CD4-positive, alpha-beta memory T cell (primary cell): ENCODE measurements at regions of chr1 and their contacts with region 1.

Region 1: DNA sequence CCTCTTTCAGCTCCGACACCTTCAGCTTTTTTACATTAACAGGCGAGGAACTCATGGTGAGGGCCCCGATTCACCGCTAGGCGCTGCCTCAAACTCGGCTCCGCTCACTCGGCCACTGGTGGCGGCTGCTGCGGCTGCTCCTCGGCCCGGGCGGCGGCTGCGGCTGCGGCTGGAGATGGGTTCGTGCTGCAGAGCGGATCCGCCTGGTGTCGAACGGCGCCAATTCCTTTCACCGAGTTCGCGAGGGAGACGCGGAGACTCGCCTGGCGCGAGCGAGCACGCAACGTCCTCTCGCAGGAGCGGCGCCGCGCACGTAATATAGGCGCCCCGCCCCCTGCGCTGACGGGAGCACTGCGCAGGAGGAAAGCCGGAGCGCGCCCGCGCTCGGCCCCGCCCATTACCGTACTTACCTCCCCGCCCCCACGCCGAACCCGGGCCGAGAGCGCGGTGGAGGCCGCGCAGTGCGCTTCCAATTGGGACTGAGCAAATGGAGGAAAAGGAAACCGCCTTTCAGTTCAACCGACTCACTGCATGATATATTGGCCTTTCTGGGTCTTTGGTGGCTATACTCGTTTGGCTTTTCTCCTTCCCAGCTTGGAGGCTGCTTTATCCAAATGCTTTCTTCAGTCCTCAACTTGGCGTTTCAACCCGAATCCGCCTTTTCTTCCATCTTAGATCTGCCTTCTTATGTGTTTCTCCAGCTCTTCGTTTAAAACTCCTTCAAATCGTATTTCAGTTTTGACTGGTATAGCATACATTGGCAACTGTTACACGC is at the start of gene HNRNPU:
- DNase-seq: peak; percentile 94 to 98 (median 98)
- H3K4me3 ChIP-seq: peak within 1 kb of the TSS; percentile 64 to 77
- H3K4me3 Mint-ChIP-seq: peak within 1 kb of the TSS; percentile 86 to 97 (median 96)
- H3K27ac ChIP-seq: peak within 1 kb of the TSS; percentile 99
- H3K27ac Mint-ChIP-seq: peak within 1 kb of the TSS; percentile 97 to 100 (median 99)
- H3K4me1 ChIP-seq: peaks cover 39% of the 10 kb centered on the region
- H3K4me1 Mint-ChIP-seq: peaks cover 29 to 70% (median 40%) of the 10 kb centered on the region in 4 donors
- H3K27me3 ChIP-seq: no peaks in the 10 kb centered on the region
- H3K27me3 Mint-ChIP-seq: peaks cover 0 to 1% of the 10 kb centered on the region in 2 donors
- total RNA-seq, gene HNRNPU: 370 to 385 TPM

Region 2: DNA sequence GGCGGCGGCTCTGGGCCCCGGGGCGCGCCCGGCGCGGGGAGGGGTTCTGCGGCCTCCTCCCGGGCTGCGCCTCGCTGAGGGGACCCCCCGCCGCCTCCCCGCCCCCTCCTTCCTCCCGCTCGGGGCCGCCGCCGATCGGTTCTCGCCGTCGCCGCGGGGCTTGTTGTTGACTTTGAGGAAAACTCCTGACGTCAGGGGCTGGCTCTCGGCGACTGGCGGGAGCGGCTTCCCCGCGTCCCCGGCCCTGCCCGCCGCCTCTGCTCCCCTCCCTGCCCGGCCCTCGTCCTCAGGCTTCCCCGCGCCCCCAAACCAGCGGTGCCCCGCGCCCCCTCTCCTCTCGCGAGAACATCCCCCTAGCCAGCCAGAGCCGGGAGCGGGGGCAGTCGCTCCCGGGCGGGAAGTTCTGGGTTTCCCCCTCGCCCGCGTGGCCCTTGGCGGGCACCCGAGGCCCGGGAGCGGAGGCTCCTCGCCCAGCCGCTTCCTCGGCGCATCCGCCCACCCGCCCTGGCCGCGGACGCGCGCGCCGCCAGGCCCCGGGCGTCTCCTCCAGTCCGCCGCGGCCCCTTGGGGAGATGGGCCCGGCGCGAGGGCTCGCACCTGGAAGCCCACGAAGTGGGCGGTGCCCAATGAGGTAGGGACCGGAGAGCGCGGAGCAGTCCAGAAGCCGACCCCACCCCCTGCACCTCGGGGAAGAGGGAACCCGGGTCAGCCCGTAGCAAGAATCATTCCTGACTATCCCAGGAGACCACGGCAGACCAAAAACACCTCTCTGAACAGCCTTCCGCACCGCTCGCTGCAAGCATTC is 1013.8 kb before region 1 on chr1:
- CTCF ChIA-PET with region 1: no interaction called
- POLR2A ChIA-PET with region 1: no interaction called
- intact Hi-C with region 1: loop called (anchors 10 kb)
- DNase-seq: peak; percentile 87 to 91 (median 89)
- H3K4me3 ChIP-seq: peak overlapping the region; percentile 63 to 70
- H3K4me3 Mint-ChIP-seq: peak overlapping the region; percentile 90 to 95 (median 94)
- H3K27ac ChIP-seq: peak overlapping the region; percentile 95
- H3K27ac Mint-ChIP-seq: peak overlapping the region; percentile 86 to 98 (median 97)
- H3K4me1 ChIP-seq: peaks cover 38% of the 10 kb centered on the region
- H3K4me1 Mint-ChIP-seq: peaks cover 22 to 39% (median 31%) of the 10 kb centered on the region in 4 donors
- H3K27me3 ChIP-seq: no peaks in the 10 kb centered on the region
- H3K27me3 Mint-ChIP-seq: peaks cover 0 to 2% of the 10 kb centered on the region in 2 donors

Region 3: DNA sequence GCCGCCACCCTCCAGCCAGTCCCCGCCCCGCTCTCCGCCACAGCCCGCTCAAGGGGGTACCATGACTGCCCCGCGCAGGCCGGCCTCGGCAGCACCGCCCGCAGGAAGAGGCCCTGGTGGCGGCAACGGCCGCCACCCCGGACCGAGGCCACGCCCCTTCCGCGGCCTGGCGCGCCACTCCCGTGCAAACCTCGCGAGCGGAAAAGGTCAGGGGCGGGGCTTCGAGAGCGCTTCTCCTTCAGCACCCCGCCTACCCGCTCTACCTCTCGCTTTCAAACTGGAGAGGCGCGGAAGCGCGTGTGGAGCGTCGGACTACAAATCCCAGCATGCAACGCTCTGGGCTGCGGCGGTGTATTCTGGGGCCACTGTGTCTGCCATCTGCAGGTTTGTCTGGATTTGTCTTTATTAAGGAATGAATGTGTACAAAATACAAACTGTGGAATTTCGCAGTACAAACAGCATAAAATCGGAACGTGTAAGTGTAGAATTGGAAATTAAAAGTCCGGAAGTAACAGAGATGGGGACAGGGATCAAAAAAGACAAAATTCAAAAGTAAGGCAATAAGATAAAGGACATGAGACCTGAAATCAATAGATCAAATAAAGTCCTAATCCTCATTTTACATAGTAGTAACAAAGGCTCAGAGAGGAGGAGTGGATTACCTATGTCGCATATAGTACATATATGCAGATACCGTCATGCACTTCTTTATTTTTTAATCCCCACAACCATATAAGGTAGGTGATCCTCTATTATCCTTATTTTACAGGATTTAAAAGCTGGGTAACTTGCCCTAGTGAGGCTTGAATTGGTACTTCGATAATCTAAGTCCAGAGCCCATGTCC is 412.3 kb before region 1 on chr1:
- CTCF ChIA-PET with region 1: no interaction called
- POLR2A ChIA-PET with region 1: interaction called, 20 read pairs
- intact Hi-C with region 1: loop called (anchors 1 kb)
- DNase-seq: peak; percentile 98 to 99 (median 99)
- H3K4me3 ChIP-seq: peak overlapping the region in 1 of 2 donors; percentile 95
- H3K4me3 Mint-ChIP-seq: peak overlapping the region; percentile 87 to 97 (median 92)
- H3K27ac ChIP-seq: peak overlapping the region; percentile 94
- H3K27ac Mint-ChIP-seq: peak overlapping the region; percentile 87 to 100 (median 95)
- H3K4me1 ChIP-seq: peaks cover 39% of the 10 kb centered on the region
- H3K4me1 Mint-ChIP-seq: peaks cover 31 to 48% (median 35%) of the 10 kb centered on the region in 4 donors
- H3K27me3 ChIP-seq: no peaks in the 10 kb centered on the region
- H3K27me3 Mint-ChIP-seq: no peaks in the 10 kb centered on the region

Region 4: GRCh38 chr1:244652699-244653466 is 211.6 kb before region 1 on chr1 and contains the start of gene DESI2:
- CTCF ChIA-PET with region 1: no interaction called
- POLR2A ChIA-PET with region 1: interaction called, 45 read pairs
- intact Hi-C with region 1: loop called (anchors 1 kb)
- DNase-seq: peak; percentile 97 to 100 (median 99)
- H3K4me3 ChIP-seq: peak within 1 kb of the TSS; percentile 61 to 73
- H3K4me3 Mint-ChIP-seq: peak within 1 kb of the TSS; percentile 80 to 91 (median 86)
- H3K27ac ChIP-seq: peak within 1 kb of the TSS; percentile 89
- H3K27ac Mint-ChIP-seq: peak within 1 kb of the TSS; percentile 43 to 95 (median 93)
- H3K4me1 ChIP-seq: peaks cover 43% of the 10 kb centered on the region
- H3K4me1 Mint-ChIP-seq: peaks cover 21 to 24% (median 22%) of the 10 kb centered on the region in 4 donors
- H3K27me3 ChIP-seq: no peaks in the 10 kb centered on the region
- H3K27me3 Mint-ChIP-seq: no peaks in the 10 kb centered on the region
- total RNA-seq, gene DESI2: 21.1 to 22.8 TPM

Region 5: GRCh38 chr1:244918421-244919319 is 54.2 kb after region 1 on chr1:
- CTCF ChIA-PET with region 1: interaction called, 6 read pairs
- POLR2A ChIA-PET with region 1: interaction called, 34 read pairs
- intact Hi-C with region 1: loop called (anchors 1 kb)
- DNase-seq: peak; percentile 54 to 79 (median 78)
- H3K4me3 ChIP-seq: peak overlapping the region; percentile 36 to 64
- H3K4me3 Mint-ChIP-seq: peak overlapping the region; percentile 78 to 94 (median 91)
- H3K27ac ChIP-seq: no peak overlapping the region
- H3K27ac Mint-ChIP-seq: peak overlapping the region; percentile 54 to 91 (median 85)
- H3K4me1 ChIP-seq: peaks cover 7% of the 10 kb centered on the region
- H3K4me1 Mint-ChIP-seq: peaks cover 4 to 16% (median 11%) of the 10 kb centered on the region in 4 donors
- H3K27me3 ChIP-seq: no peaks in the 10 kb centered on the region
- H3K27me3 Mint-ChIP-seq: peaks cover 4 to 7% of the 10 kb centered on the region in 2 donors

Region 6: DNA sequence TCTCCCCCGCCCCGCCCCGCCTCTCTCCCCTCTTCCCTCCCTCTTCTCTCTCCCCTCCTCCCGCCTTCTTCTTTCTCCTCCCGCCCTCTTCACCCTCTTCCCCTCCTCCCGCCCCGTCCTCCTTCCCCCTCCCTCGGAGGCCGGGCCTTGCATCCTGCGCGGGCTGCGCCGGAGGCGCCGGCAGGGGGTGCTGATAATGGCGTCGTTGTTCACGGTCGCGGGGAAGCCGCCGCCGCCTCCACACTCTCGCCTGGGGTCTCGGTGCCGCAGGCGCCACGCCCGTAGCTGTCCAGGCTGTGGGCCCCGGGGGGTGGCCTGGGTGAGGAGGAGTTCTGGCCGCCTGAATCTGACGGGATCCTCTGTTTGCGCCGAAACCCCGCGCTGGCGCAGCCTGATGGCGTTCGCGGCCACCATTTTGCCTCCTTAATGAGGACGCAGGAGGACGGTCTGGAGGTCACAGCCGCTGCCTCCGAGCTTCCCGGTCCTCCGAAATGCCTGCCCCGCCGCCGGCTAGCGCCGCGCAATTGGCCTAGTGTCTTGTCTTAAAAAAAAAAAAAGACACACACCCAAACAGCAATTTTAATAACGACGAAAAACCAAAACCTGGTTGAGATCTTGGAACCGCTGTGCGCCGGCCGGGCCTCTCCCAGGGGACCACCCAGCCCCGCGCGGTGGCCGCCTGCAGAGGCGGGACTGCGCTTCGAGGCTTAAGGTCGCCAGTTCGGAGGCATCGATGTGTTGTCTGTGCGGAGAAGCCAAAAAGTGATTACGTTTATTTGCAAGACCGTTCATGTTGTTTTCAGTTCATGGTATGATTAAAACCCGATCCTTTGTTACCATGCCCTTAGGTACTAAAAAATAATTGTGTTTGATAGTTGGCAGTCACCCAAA is 106.5 kb after region 1 on chr1:
- CTCF ChIA-PET with region 1: interaction called, 30 read pairs
- POLR2A ChIA-PET with region 1: interaction called, 356 read pairs
- intact Hi-C with region 1: loop called (anchors 1 kb)
- DNase-seq: peak; percentile 95 to 97 (median 96)
- H3K4me3 ChIP-seq: peak overlapping the region; percentile 85 to 95
- H3K4me3 Mint-ChIP-seq: peak overlapping the region; percentile 87 to 98 (median 94)
- H3K27ac ChIP-seq: peak overlapping the region; percentile 100
- H3K27ac Mint-ChIP-seq: peak overlapping the region; percentile 95 to 99 (median 99)
- H3K4me1 ChIP-seq: peaks cover 20% of the 10 kb centered on the region
- H3K4me1 Mint-ChIP-seq: peaks cover 12 to 31% (median 18%) of the 10 kb centered on the region in 4 donors
- H3K27me3 ChIP-seq: no peaks in the 10 kb centered on the region
- H3K27me3 Mint-ChIP-seq: no peaks in the 10 kb centered on the region

Region 7: GRCh38 chr1:246566128-246566812 is 1701.8 kb after region 1 on chr1 and contains the starts of genes CNST and TFB2M:
- CTCF ChIA-PET with region 1: no interaction called
- POLR2A ChIA-PET with region 1: interaction called, 4 read pairs
- intact Hi-C with region 1: loop called (anchors 5 kb)
- DNase-seq: peak; percentile 89 to 93 (median 91)
- H3K4me3 ChIP-seq: peak within 1 kb of the TSS; percentile 84 to 99
- H3K4me3 Mint-ChIP-seq: peak within 1 kb of the TSS; percentile 97 to 99 (median 98)
- H3K27ac ChIP-seq: peak within 1 kb of the TSS; percentile 92
- H3K27ac Mint-ChIP-seq: peak within 1 kb of the TSS; percentile 89 to 99 (median 97)
- H3K4me1 ChIP-seq: peaks cover 61% of the 10 kb centered on the region
- H3K4me1 Mint-ChIP-seq: peaks cover 29 to 68% (median 46%) of the 10 kb centered on the region in 4 donors
- H3K27me3 ChIP-seq: no peaks in the 10 kb centered on the region
- H3K27me3 Mint-ChIP-seq: no peaks in the 10 kb centered on the region
- total RNA-seq, gene CNST: 97.8 to 103 TPM
- total RNA-seq, gene TFB2M: 8.8 to 9.6 TPM